Posterior cingulate gyrus (tissue), 11 donors: ENCODE measurements at regions of chr17 and their contacts with region 1.

Region 1: DNA sequence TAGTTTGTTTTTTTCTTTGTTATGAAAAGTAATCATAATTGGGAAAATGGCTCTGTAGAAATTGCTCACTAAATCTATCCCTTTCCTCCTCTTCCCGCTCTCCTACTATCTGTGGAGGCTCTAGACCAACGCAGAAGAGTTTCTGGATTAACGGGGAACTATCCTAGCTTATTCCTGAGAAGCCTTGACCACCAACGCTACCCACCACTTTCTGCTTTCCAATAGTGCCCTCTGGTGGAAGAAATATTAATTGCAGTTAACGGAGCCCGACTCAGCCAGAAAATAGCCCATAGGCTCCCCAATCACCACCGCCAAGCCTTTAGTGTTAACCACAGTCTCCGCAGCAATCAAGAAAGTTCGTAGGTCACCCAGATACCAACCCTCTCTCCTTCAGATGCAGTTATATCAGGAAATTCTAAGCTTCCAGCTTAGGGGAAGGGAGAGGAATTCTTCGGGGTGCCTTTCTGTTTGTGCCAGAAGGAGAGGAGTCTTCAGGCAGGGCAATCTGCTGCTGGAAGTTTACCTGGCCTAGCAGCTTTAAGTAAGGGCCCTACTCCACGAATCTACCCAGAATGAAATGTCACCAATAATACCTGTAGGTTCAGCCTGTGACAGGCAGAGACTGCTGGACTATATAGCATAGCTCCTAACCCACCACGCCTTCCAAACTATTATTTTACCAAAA is 23.0 kb upstream of the NSRP1 start:
- DNase-seq: peak in 4 of 10 donors; percentile 33 to 54 (median 38)

Region 2: GRCh38 chr17:30027676-30028075 is 65.9 kb before region 1 on chr17:
- intact Hi-C with region 1: loop called (anchors 5 kb)
- DNase-seq: no peak

Region 3: DNA sequence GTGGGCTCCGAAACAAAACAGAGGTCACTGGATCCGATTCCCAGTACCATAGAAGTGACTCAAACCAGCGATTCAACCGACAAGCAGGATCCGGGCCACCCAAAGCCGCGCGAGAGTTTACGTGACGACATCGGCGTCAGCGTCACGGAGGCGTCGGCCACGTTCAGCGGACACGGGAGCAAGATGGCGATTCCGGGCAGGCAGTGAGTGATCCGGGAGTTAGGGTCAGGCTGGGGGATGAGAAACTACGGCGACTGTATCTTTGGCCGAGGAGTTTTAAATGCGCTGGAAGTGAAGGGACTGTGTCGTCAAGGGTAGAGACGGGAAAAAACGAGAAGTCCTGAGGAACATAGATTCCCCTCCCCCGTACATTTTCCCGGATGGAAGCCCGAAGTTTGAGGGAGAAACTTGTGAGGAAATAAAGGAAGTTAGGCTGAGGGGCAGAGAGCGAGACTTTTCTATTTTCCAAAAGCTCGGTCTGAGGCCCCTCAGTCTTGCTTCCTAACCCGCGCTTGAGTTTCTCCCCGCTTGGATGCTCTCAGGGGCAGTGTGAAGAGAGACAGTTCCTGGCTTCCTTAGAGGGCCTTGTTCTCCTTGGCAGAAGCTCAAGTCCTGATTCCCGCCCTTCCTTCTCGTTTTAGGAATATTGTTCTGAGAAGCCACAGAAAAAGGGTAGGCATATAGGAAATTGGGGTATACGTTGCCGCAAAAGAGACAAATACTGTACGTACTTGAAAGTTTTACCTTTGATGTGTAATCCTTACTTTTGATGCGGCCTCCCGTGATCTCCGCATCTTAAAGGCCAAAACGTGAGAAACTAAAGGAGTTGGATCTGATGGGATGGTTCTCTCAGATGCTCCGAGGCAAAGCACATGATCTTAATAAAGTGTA is 23.3 kb after region 1 on chr17 and contains the start of gene NSRP1:
- intact Hi-C with region 1: no loop called
- DNase-seq: peak; percentile 87 to 98 (median 94)

Region 4: GRCh38 chr17:30137158-30137557 is 43.6 kb after region 1 on chr17:
- intact Hi-C with region 1: no loop called
- DNase-seq: no peak

Region 5: GRCh38 chr17:30148376-30148775 is 54.8 kb after region 1 on chr17:
- intact Hi-C with region 1: no loop called
- DNase-seq: no peak